ENCODE measurements at regions of chr13 and their contacts with region 1.

Region 1: GRCh38 chr13:32267836-32268439 is 47.2 kb downstream of the ZAR1L start:
- DNase-seq: peak; percentile 75
- ATAC-seq: peak; percentile 96
- H3K4me3 Mint-ChIP-seq: no peak overlapping the region
- H3K27ac Mint-ChIP-seq: no peak overlapping the region
- H3K4me1 Mint-ChIP-seq: peaks cover 5% of the 10 kb centered on the region
- H3K27me3 Mint-ChIP-seq: no peaks in the 10 kb centered on the region
- CTCF ChIP-seq: peak; percentile 83

Region 2: DNA sequence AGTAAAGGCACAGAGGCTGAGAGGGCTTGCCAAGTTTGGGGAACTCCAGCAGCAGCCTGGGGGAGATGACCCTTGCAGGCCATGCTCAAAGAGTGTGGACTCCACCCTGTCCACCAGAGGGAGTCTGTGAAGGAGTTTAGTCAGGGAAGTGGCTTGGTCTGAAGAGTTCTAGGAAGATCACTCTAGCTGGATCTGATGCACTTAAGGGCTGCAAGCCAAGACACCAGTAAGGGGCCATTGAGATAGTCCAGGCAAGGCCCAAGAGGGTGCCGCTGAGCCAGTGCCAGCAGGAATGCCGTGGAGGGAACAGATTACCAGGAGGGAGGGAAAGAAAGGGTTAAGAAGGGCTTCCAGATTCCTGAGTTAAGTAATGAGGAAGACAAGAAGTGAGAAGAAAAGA is 21.5 kb before region 1 on chr13:
- CTCF ChIA-PET with region 1: interaction called, 10 read pairs
- POLR2A ChIA-PET with region 1: no interaction called
- intact Hi-C with region 1: no loop called
- DNase-seq: peak; percentile 61
- ATAC-seq: peak; percentile 78
- H3K4me3 Mint-ChIP-seq: no peak overlapping the region
- H3K27ac Mint-ChIP-seq: no peak overlapping the region
- H3K4me1 Mint-ChIP-seq: no peaks in the 10 kb centered on the region
- H3K27me3 Mint-ChIP-seq: no peaks in the 10 kb centered on the region
- CTCF ChIP-seq: peak; percentile 65

Region 3: GRCh38 chr13:32255724-32256109 is 12.2 kb before region 1 on chr13:
- CTCF ChIA-PET with region 1: interaction called, 11 read pairs
- POLR2A ChIA-PET with region 1: no interaction called
- intact Hi-C with region 1: no loop called
- DNase-seq: no peak
- ATAC-seq: no peak
- H3K4me3 Mint-ChIP-seq: no peak overlapping the region
- H3K27ac Mint-ChIP-seq: no peak overlapping the region
- H3K4me1 Mint-ChIP-seq: no peaks in the 10 kb centered on the region
- H3K27me3 Mint-ChIP-seq: no peaks in the 10 kb centered on the region
- CTCF ChIP-seq: no peak

Region 4: GRCh38 chr13:32278426-32278825 is 10.5 kb after region 1 on chr13:
- CTCF ChIA-PET with region 1: interaction called, 11 read pairs
- POLR2A ChIA-PET with region 1: interaction called, 7 read pairs
- intact Hi-C with region 1: no loop called
- DNase-seq: no peak
- ATAC-seq: peak; percentile 58
- H3K4me3 Mint-ChIP-seq: no peak overlapping the region
- H3K27ac Mint-ChIP-seq: no peak overlapping the region
- H3K4me1 Mint-ChIP-seq: peaks cover 2% of the 10 kb centered on the region
- H3K27me3 Mint-ChIP-seq: peaks cover 2% of the 10 kb centered on the region
- CTCF ChIP-seq: no peak

Region 5: DNA sequence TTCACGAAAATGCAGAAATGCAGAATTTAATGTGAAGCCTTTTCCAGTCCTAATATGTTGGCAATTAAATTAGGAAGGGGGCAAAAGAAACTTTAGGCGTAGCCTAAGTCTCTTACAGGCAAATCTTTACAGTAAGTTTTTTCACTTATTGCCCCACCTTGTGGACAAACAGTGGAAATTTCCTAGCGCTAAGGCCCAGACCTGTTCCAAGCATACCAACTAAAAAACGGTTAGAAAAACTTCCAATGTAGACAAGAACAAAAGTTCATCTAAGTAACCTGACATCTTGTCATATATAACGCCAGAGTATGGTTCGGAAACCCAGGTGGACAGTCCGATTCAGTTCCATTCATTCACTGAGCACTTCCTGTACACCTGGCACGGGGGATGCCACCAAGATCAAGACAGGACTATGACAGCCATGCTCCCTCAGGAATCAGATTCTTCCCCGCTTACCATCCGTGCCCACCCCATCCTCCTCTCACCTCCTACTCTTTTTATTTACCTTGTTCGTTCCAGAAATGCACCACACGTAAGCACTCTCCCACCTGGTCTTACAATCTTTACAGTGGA is 42.3 kb after region 1 on chr13:
- CTCF ChIA-PET with region 1: interaction called, 13 read pairs
- POLR2A ChIA-PET with region 1: interaction called, 3 read pairs
- intact Hi-C with region 1: loop called (anchors 5 kb)
- DNase-seq: peak; percentile 25
- ATAC-seq: peak; percentile 40
- H3K4me3 Mint-ChIP-seq: no peak overlapping the region
- H3K27ac Mint-ChIP-seq: no peak overlapping the region
- H3K4me1 Mint-ChIP-seq: peaks cover 19% of the 10 kb centered on the region
- H3K27me3 Mint-ChIP-seq: no peaks in the 10 kb centered on the region
- CTCF ChIP-seq: peak; percentile 61

Region 6: GRCh38 chr13:32581177-32581786 is 313.3 kb after region 1 on chr13:
- CTCF ChIA-PET with region 1: interaction called, 13 read pairs
- POLR2A ChIA-PET with region 1: no interaction called
- intact Hi-C with region 1: no loop called
- DNase-seq: no peak
- ATAC-seq: no peak
- H3K4me3 Mint-ChIP-seq: no peak overlapping the region
- H3K27ac Mint-ChIP-seq: no peak overlapping the region
- H3K4me1 Mint-ChIP-seq: peaks cover 9% of the 10 kb centered on the region
- H3K27me3 Mint-ChIP-seq: peaks cover 3% of the 10 kb centered on the region
- CTCF ChIP-seq: peak; percentile 84

Measured in activated CD8-positive, alpha-beta T cell treated with anti-CD3 and anti-CD28 coated beads for 36 hours (primary cell).